Activated CD4-positive, alpha-beta T cell treated with anti-CD3 and anti-CD28 coated beads, Interleukin-2, amount 10 ng/mL, durations not matched to agents 7 days and 5 days (primary cell): ENCODE measurements at regions of chr17 and their contacts with region 1.

Region 1: DNA sequence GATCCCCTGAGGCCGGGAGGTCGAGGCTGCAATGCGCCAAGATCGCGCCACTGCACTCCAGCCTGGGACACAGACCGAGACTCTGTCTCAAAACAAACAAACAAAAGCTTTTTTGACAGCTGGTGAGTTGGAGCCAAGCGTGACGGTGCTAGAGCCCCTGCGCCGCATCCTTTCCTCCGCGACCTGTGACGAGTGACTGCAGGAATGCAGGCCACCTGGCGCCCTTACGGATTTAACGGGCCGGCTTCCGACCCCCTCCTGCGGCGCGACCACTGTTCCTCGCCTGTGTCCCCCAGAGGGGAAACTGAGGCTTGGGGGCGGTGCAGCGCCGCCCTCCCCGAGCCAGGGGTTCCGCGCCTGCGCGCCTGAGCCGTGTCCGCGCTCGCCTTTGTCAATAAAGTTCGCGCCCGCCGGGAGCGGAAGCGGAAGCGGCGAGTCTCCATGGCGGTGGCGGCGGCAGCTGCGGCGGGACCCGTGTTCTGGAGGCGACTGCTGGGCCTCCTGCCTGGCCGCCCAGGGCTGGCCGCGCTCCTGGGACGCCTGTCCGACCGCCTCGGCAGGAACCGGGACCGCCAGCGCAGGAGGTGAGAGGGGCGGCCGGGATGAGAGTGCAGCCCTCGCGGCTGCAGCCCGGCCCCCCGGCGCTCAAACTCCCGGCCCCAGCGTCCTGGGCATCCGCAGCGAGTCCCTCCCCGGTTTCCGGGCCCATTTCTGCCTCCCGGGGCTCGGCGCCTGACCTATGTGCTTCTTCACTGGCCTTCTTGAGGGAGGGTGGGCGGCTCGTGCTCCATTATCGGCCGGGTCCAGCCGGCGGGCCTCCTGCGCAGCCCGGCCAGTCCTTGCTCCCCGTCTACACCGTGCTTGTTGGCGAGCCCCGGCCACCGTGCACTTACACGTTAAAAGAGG is at the start of gene PGS1:
- DNase-seq: peak; percentile 87
- H3K4me3 Mint-ChIP-seq: peak within 1 kb of the TSS; percentile 97
- H3K27ac Mint-ChIP-seq: peak within 1 kb of the TSS; percentile 93
- H3K4me1 Mint-ChIP-seq: peaks cover 45% of the 10 kb centered on the region
- H3K27me3 Mint-ChIP-seq: no peaks in the 10 kb centered on the region
- total RNA-seq, gene PGS1: 71.1 to 78.3 TPM

Region 2: DNA sequence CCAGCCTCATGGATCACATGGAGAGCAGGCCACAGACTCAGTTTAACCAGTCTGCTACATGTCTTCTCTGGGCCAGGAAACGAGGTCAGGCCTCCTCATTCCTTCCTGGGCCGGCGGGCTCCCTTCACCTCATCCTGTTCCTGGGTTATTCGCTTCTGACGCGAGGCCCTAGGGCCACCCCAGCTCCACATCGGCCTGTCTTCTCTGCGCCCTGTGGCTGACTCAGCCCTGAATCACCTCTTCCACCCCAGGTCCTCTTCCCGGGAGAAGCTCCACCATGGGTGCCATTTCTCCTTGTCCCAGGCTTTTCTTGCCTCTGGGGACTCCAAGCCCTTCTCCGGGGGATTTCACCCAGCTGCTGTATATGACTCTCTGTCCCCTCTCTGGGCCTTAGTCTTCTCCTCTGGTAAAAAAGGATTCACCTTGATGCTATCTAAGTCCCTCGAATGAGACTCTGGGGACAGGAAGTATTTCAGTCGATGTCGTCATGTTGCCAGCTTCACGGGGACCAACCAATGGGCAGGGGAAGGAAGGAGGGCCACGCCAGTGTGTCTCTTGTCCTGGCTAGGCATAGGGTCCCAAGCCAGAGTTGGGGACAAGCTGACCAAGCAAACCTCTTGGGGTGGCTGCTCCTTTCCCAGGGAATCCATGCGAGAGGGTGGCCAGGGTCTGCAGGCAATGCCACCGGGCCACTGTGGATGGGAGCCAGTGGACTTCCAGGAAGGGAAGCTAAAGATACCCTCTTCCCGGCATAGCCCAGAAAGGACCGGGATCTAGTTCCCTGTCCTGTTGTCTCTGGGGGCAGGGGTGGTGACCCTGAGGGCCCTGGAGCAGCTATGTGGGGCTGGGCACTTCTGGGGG is 77.3 kb before region 1 on chr17:
- CTCF ChIA-PET with region 1: no interaction called
- POLR2A ChIA-PET with region 1: no interaction called
- DNase-seq: no peak
- H3K4me3 Mint-ChIP-seq: no peak overlapping the region
- H3K27ac Mint-ChIP-seq: peak overlapping the region; percentile 84
- H3K4me1 Mint-ChIP-seq: peaks cover 13% of the 10 kb centered on the region
- H3K27me3 Mint-ChIP-seq: no peaks in the 10 kb centered on the region

Region 3: GRCh38 chr17:78365561-78366108 is 12.8 kb before region 1 on chr17:
- CTCF ChIA-PET with region 1: interaction called, 56 read pairs
- POLR2A ChIA-PET with region 1: no interaction called
- DNase-seq: no peak
- H3K4me3 Mint-ChIP-seq: no peak overlapping the region
- H3K27ac Mint-ChIP-seq: no peak overlapping the region
- H3K4me1 Mint-ChIP-seq: peaks cover 19% of the 10 kb centered on the region
- H3K27me3 Mint-ChIP-seq: peaks cover 5% of the 10 kb centered on the region

Region 4: GRCh38 chr17:78421484-78422266 is 43.2 kb after region 1 on chr17:
- CTCF ChIA-PET with region 1: interaction called, 26 read pairs
- POLR2A ChIA-PET with region 1: no interaction called
- DNase-seq: peak; percentile 75
- H3K4me3 Mint-ChIP-seq: no peak overlapping the region
- H3K27ac Mint-ChIP-seq: peak overlapping the region; percentile 55
- H3K4me1 Mint-ChIP-seq: peaks cover 41% of the 10 kb centered on the region
- H3K27me3 Mint-ChIP-seq: no peaks in the 10 kb centered on the region